Mammary epithelial cell (primary cell): ENCODE measurements at regions of chr16 and their contacts with region 1.

Region 1: GRCh38 chr16:30052671-30053372 is 12.7 kb upstream of the ALDOA start:
- DNase-seq: peak; percentile 90
- H3K4me3 ChIP-seq: peak overlapping the region; percentile 77 to 90 (median 89)
- H3K27ac ChIP-seq: peak overlapping the region; percentile 78
- H3K4me1 ChIP-seq: peaks cover 22% of the 10 kb centered on the region
- H3K27me3 ChIP-seq: no peaks in the 10 kb centered on the region
- CTCF ChIP-seq: no peak

Region 2: GRCh38 chr16:30115238-30115637 is 62.4 kb after region 1 on chr16:
- CTCF ChIA-PET with region 1: no interaction called
- dilution Hi-C with region 1: loop called (anchors 5 kb)
- in situ Hi-C with region 1: no loop called
- intact Hi-C with region 1: no loop called
- DNase-seq: no peak
- H3K4me3 ChIP-seq: no peak overlapping the region
- H3K27ac ChIP-seq: no peak overlapping the region
- H3K4me1 ChIP-seq: peaks cover 20% of the 10 kb centered on the region
- H3K27me3 ChIP-seq: no peaks in the 10 kb centered on the region
- CTCF ChIP-seq: no peak

Region 3: GRCh38 chr16:30131869-30132475 is 79.2 kb after region 1 on chr16:
- CTCF ChIA-PET with region 1: no interaction called
- dilution Hi-C with region 1: no loop called
- in situ Hi-C with region 1: no loop called
- intact Hi-C with region 1: no loop called
- DNase-seq: no peak
- H3K4me3 ChIP-seq: no peak overlapping the region
- H3K27ac ChIP-seq: no peak overlapping the region
- H3K4me1 ChIP-seq: no peaks in the 10 kb centered on the region
- H3K27me3 ChIP-seq: no peaks in the 10 kb centered on the region
- CTCF ChIP-seq: no peak

Region 4: GRCh38 chr16:30152517-30152916 is 99.7 kb after region 1 on chr16:
- CTCF ChIA-PET with region 1: no interaction called
- dilution Hi-C with region 1: no loop called
- in situ Hi-C with region 1: no loop called
- intact Hi-C with region 1: no loop called
- DNase-seq: no peak
- H3K4me3 ChIP-seq: no peak overlapping the region
- H3K27ac ChIP-seq: no peak overlapping the region
- H3K4me1 ChIP-seq: no peaks in the 10 kb centered on the region
- H3K27me3 ChIP-seq: no peaks in the 10 kb centered on the region
- CTCF ChIP-seq: no peak